CD14-positive monocyte (primary cell): ENCODE measurements at regions of chr4 and their contacts with region 1.

Region 1: DNA sequence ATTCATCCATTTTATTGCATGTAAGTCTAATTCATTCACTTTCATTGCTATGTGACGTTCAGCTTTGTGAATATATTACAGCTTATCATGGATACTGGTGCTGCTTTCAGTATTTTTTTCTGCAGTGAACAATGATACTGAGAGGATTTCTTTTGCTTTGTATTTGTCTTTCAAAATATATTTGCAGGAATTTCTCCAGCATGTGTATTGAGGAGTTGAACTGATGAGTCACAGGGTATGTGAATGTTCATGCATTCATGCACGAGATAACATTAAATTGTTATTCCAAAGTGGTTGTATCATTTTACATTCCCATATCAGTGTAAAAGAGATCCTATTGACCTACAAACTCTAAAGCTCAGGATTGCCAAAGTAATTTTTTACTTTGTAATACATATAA is 283.8 kb upstream of the ARSJ start:
- DNase-seq: no peak
- H3K4me3 ChIP-seq: no peak overlapping the region
- H3K4me3 Mint-ChIP-seq: no peak overlapping the region
- H3K27ac ChIP-seq: no peak overlapping the region
- H3K27ac Mint-ChIP-seq: no peak overlapping the region
- H3K4me1 ChIP-seq: no peaks in the 10 kb centered on the region
- H3K4me1 Mint-ChIP-seq: no peaks in the 10 kb centered on the region
- H3K27me3 ChIP-seq: no peaks in the 10 kb centered on the region
- H3K27me3 Mint-ChIP-seq: no peaks in the 10 kb centered on the region
- CTCF ChIP-seq: no peak

Region 2: GRCh38 chr4:114250439-114250891 is 12.8 kb before region 1 on chr4:
- intact Hi-C with region 1: loop called (anchors 1 kb)
- DNase-seq: no peak
- H3K4me3 ChIP-seq: no peak overlapping the region
- H3K4me3 Mint-ChIP-seq: no peak overlapping the region
- H3K27ac ChIP-seq: no peak overlapping the region
- H3K27ac Mint-ChIP-seq: no peak overlapping the region
- H3K4me1 ChIP-seq: no peaks in the 10 kb centered on the region
- H3K4me1 Mint-ChIP-seq: no peaks in the 10 kb centered on the region
- H3K27me3 ChIP-seq: no peaks in the 10 kb centered on the region
- H3K27me3 Mint-ChIP-seq: peaks cover 0 to 1% (median 0%) of the 10 kb centered on the region in 3 donors
- CTCF ChIP-seq: no peak